CD4-positive, alpha-beta T cell (primary cell): ENCODE measurements at regions of chr15 and their contacts with region 1.

Region 1: DNA sequence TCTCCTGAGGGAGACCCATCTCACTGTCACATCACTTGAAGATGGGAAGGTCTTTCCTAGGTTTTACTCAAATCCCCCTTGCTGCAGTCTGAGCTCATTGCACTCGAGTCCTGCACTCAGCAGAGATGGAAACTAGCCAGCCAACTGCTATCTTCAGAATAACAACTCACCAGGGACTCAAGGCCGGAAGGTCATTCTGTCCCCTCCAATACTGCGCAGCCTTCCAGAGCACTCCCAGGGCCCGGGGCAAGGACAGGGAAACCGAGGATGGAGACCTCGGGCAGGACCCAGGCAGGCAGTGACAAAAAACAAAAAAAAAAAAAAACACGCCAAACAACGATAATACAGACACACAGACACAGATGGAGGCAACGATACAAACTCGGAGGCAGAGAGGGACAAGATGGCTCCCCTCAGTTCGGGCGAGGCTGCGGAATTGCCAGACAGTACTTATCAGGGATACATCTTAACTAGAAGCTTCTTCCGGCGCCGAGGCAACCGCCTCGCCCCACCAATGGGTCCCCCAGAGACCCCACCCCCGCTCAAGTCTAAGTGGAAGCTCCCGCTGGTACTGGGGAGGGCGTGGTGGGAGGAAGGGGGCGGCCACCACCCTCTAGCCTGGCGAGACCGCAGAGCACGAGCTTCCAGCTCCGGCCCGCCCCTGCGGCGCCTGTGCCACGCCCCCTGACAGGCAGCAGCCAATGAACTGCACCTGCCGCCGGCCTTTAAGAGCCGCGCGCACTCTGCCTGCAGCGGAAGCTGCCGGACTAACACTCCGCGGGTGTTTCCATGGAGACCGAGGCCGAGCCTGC is 7.0 kb upstream of the MAP1A start:
- DNase-seq: peak; percentile 91 to 99 (median 95)
- ATAC-seq: peak; percentile 87
- H3K4me3 ChIP-seq: peak overlapping the region; percentile 80
- H3K4me3 Mint-ChIP-seq: peak overlapping the region; percentile 91
- H3K27ac ChIP-seq: peak overlapping the region; percentile 76 to 84
- H3K27ac Mint-ChIP-seq: peak overlapping the region; percentile 91
- H3K4me1 ChIP-seq: peaks cover 31% of the 10 kb centered on the region
- H3K4me1 Mint-ChIP-seq: peaks cover 32% of the 10 kb centered on the region
- H3K27me3 ChIP-seq: no peaks in the 10 kb centered on the region
- H3K27me3 Mint-ChIP-seq: peaks cover 1% of the 10 kb centered on the region
- CTCF ChIP-seq: no peak

Region 2: DNA sequence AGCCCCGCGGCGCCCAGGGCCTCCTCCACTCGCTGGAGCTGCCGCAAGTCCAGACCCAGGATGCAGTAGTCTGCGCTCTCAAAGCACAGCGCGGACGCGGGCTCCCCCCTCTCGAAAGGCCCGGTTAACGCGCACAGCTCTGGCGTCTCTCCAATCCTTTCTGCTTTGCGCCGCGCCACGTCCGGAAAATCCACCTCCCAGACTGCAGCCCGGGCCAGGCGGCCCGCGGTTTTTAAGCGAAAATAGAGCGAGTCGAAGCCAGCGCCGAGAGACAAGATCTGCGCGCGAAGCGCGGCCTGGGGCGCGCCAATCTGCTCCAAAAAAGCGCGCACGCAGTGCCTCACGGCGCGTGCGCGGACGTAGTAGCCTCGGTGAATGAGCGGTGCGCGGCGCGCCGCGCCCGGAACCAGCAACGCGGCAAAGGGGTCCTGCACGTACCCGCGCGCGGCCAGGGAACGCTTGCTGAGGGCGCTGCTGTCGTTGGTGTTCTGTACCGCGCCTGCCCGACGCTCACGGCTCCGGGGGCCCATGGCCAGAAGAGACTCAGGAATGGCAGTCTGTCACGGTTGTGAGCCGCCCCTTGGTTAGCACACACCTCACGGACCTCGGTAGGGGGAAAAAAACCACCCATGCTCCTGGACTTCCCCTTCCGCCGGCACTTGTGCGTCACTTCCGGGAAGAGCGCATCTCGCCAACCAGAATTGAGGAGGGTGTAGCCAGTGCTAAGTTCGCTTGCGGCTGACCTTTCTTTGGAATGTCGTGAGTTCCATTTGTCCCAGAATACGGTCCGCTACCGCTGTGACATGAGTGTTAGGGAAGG is 180.2 kb before region 1 on chr15 and contains the start of gene LCMT2:
- CTCF ChIA-PET with region 1: no interaction called
- POLR2A ChIA-PET with region 1: interaction called, 6 read pairs
- intact Hi-C with region 1: loop called in 1 of 2 experiments (anchors 5 kb)
- DNase-seq: peak; percentile 81 to 97 (median 88)
- ATAC-seq: peak; percentile 83
- H3K4me3 ChIP-seq: peak within 1 kb of the TSS; percentile 79
- H3K4me3 Mint-ChIP-seq: peak within 1 kb of the TSS; percentile 98
- H3K27ac ChIP-seq: peak within 1 kb of the TSS; percentile 92 to 96
- H3K27ac Mint-ChIP-seq: peak within 1 kb of the TSS; percentile 100
- H3K4me1 ChIP-seq: peaks cover 23% of the 10 kb centered on the region
- H3K4me1 Mint-ChIP-seq: peaks cover 41% of the 10 kb centered on the region
- H3K27me3 ChIP-seq: no peaks in the 10 kb centered on the region
- H3K27me3 Mint-ChIP-seq: peaks cover 3% of the 10 kb centered on the region
- CTCF ChIP-seq: peak; percentile 15
- total RNA-seq, gene LCMT2: 5.8 to 5.9 TPM

Region 3: DNA sequence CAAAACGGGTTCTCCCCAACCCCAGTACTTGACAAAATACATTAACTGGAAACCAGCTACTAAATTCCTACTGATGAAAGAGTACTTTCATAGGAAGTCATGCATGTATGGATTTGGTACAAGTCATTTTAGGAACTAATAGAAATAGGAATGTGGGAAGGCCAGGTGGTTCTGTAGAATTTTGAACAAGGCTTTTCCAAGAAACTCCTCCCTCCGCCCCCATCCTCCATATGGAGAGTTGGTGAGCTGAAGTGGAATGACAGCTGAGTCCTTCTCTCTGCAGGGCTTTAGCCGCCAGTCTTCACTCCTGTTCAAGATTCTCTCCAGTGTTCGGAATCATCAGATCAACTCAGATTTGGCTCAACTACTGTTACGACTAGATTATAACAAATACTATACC is 106.3 kb before region 1 on chr15:
- CTCF ChIA-PET with region 1: no interaction called
- POLR2A ChIA-PET with region 1: no interaction called
- intact Hi-C with region 1: no loop called
- DNase-seq: no peak
- ATAC-seq: no peak
- H3K4me3 ChIP-seq: no peak overlapping the region
- H3K4me3 Mint-ChIP-seq: no peak overlapping the region
- H3K27ac ChIP-seq: no peak overlapping the region
- H3K27ac Mint-ChIP-seq: peak overlapping the region; percentile 54
- H3K4me1 ChIP-seq: no peaks in the 10 kb centered on the region
- H3K4me1 Mint-ChIP-seq: no peaks in the 10 kb centered on the region
- H3K27me3 ChIP-seq: no peaks in the 10 kb centered on the region
- H3K27me3 Mint-ChIP-seq: no peaks in the 10 kb centered on the region
- CTCF ChIP-seq: no peak

Region 4: DNA sequence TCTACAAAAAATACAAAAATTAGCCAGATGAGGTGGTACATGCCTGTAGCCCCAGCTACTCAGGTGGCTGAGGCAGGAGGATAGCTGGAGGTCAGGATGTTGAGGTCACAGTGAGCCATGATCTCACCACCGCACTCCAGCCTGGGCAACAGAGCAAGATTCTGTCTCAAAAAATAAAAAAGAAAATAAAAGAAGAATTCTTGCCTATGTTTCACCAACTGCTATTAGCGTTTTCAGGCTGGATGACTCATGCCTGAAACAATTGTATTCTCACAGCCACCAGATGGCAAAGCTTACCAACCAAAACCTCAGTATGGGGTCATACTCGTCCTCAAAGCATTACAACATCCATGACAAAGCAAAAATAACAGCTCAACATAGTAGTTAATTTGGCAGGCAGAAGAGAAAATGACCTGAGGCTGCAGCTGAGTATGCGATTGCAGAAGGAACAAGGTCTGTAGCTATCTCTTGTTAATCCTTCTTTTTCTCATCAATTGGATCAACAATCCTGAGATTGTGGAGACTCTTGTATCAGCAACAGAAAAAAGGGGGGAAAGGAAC is 69.6 kb before region 1 on chr15:
- CTCF ChIA-PET with region 1: interaction called, 11 read pairs
- POLR2A ChIA-PET with region 1: no interaction called
- intact Hi-C with region 1: no loop called
- DNase-seq: peak in 4 of 14 experiments; percentile 10 to 67 (median 49)
- ATAC-seq: peak; percentile 56
- H3K4me3 ChIP-seq: no peak overlapping the region
- H3K4me3 Mint-ChIP-seq: no peak overlapping the region
- H3K27ac ChIP-seq: no peak overlapping the region
- H3K27ac Mint-ChIP-seq: no peak overlapping the region
- H3K4me1 ChIP-seq: no peaks in the 10 kb centered on the region
- H3K4me1 Mint-ChIP-seq: no peaks in the 10 kb centered on the region
- H3K27me3 ChIP-seq: no peaks in the 10 kb centered on the region
- H3K27me3 Mint-ChIP-seq: no peaks in the 10 kb centered on the region
- CTCF ChIP-seq: peak; percentile 21

Region 5: GRCh38 chr15:43483306-43484128 is 26.9 kb before region 1 on chr15:
- CTCF ChIA-PET with region 1: interaction called, 15 read pairs
- POLR2A ChIA-PET with region 1: interaction called, 9 read pairs
- intact Hi-C with region 1: loop called (anchors 2 kb)
- DNase-seq: peak in 3 of 14 experiments; percentile 49 to 54 (median 52)
- ATAC-seq: peak; percentile 51
- H3K4me3 ChIP-seq: no peak overlapping the region
- H3K4me3 Mint-ChIP-seq: no peak overlapping the region
- H3K27ac ChIP-seq: no peak overlapping the region
- H3K27ac Mint-ChIP-seq: no peak overlapping the region
- H3K4me1 ChIP-seq: no peaks in the 10 kb centered on the region
- H3K4me1 Mint-ChIP-seq: peaks cover 19% of the 10 kb centered on the region
- H3K27me3 ChIP-seq: no peaks in the 10 kb centered on the region
- H3K27me3 Mint-ChIP-seq: no peaks in the 10 kb centered on the region
- CTCF ChIP-seq: peak; percentile 53

Region 6: DNA sequence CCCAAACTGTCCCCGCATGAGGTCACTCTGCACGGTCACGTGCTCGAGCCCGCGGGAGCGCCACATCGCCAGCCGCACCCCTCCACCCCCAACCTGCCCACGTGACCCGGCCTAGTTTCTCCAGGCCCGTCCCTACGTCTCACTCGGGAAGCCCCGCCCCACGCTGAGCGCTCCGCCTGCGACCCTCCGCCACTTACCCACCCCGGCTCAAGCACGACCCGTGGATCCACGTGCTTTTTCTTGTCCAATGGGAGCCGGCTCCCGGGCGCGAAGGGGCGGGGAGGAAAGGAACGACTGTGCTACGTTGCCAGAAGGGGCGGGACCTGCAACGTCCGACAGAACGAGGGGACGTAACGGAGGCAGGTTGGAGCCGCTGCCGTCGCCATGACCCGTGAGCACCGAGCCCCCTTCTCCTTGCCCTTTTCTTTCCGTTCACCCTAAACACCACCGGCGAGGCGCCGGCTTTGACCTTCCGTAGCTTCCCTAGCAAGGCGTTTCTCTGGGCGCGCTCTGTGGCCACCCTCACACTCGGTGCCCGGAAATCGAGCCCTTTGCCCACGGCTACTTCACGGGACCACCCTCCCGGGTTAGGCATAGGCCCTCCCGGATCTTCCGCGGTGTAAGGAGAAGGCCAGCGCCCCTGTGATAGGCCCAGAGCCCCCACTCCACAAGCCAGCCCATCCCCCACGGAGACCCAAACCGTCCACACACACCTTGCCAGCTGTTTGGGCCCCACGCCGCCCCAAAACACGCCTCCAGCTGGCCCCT is 281.8 kb after region 1 on chr15 and contains the start of gene SERF2:
- CTCF ChIA-PET with region 1: no interaction called
- POLR2A ChIA-PET with region 1: no interaction called
- intact Hi-C with region 1: loop called in 1 of 2 experiments (anchors 10 kb)
- DNase-seq: peak; percentile 98 to 100 (median 99)
- ATAC-seq: peak; percentile 94
- H3K4me3 ChIP-seq: peak within 1 kb of the TSS; percentile 100
- H3K4me3 Mint-ChIP-seq: peak within 1 kb of the TSS; percentile 99
- H3K27ac ChIP-seq: peak within 1 kb of the TSS; percentile 98 to 99
- H3K27ac Mint-ChIP-seq: peak within 1 kb of the TSS; percentile 99
- H3K4me1 ChIP-seq: peaks cover 38% of the 10 kb centered on the region
- H3K4me1 Mint-ChIP-seq: peaks cover 58% of the 10 kb centered on the region
- H3K27me3 ChIP-seq: peaks cover 0 to 3% of the 10 kb centered on the region in 2 experiments
- H3K27me3 Mint-ChIP-seq: no peaks in the 10 kb centered on the region
- CTCF ChIP-seq: no peak
- total RNA-seq, gene SERF2: 319 to 323 TPM